Spleen (tissue), 13 donors: ENCODE measurements at regions of chr6 and their contacts with region 1.

Region 1: DNA sequence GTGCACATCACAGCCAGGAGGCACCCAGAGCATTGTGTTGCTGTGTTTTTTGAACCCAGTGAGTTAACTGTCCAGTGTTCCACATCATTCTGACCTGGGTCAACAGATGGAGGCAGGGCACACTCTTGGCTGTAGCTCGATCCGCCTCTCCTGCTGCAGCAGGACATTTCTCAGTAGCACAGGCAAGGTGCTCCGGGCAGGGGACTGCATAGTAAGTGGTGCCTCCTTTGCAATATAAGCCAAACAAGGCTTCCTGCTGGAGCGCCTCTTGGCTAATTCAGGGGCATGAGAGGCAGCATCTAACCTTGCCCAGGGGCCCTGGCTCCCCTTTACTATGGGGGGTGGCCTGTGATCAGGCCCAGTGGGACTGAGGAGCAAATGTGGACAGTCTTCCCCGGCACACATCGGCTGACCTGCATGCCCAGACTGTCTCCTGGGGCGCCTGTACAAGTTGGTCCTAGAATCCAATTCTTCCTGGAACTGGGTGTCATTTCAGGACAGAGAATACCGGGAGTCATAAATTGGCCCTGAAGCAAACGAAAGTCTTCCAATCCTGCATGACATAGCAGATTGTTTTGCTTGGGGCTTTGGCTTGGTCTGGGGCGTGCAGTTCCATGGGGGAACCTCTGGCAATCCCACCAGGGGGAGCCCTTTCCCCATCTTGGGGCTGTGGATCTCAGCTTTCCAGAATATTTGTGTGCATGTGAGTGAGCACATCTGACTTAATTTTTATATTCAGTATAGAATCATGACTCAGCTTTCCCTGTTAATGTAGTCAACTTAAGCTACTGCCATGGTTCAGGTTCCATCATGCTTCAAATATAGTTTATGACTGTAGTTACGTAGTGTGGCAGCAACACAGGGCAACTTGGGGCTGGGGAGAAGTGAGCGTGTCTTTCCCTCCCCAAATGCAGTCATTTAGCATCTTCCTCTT is 56.0 kb upstream of the DDR1 start:
- DNase-seq: peak; percentile 93
- H3K4me3 ChIP-seq: peak overlapping the region in 5 of 8 donors; percentile 22 to 65 (median 40)
- H3K27ac ChIP-seq: peak overlapping the region; percentile 36 to 91 (median 80)
- H3K4me1 ChIP-seq: peaks cover 10 to 86% (median 56%) of the 10 kb centered on the region in 6 donors
- H3K27me3 ChIP-seq: no peaks in the 10 kb centered on the region
- CTCF ChIP-seq: peak; percentile 84 to 98 (median 92)
- POLR2A ChIP-seq: no peak

Region 2: DNA sequence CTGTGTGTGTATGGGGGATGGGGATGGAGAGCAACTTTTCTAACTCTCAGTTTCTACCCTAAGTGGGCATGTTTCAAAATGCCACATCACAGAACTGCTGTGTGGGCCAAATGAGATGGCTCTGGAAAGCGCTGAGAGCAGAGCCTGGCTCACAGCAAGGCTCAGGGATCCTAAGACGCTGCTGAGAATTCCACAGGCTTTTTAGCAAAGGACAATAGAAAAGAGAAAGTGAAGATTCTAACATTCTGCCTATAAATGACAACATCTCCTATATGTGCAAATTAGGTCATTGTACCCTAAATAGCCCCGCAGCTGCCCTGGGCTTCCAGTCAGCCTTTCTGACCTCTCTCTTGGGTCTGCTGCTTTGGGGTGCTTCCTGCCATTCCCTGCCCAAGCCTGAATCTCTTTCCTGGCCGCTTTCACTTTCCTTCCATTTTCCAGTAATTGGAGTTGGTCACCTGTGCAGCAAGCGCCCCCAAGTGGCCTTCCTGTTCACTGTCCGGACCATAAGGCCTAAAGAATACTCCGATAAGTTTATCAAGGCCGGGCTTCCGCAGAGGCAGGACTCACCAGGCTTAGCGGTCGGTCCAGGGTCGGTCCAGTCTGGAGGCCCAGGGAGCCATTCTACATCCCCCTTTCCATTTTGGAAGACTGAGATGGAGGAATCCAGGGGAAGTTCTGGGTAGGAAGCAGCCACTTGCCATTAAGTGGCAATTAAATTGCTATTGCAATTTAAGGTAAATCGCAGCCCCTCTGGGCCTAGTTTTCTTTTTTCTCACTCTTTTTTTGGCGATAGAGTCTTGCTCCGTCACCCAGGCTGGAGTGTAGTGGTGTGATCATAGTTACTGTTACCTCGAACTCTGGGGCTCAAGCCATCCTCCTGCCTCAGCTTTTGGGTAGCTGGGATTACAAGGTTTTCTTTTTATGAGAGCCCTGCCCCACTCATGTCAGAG is 49.4 kb after region 1 on chr6:
- intact Hi-C with region 1: loop called (anchors 5 kb)
- DNase-seq: peak; percentile 93
- H3K4me3 ChIP-seq: peak overlapping the region in 7 of 8 donors; percentile 6 to 52 (median 16)
- H3K27ac ChIP-seq: peak overlapping the region; percentile 69 to 85 (median 80)
- H3K4me1 ChIP-seq: peaks cover 10 to 44% (median 26%) of the 10 kb centered on the region in 6 donors
- H3K27me3 ChIP-seq: no peaks in the 10 kb centered on the region
- CTCF ChIP-seq: peak; percentile 68 to 94 (median 84)
- POLR2A ChIP-seq: no peak

Region 3: DNA sequence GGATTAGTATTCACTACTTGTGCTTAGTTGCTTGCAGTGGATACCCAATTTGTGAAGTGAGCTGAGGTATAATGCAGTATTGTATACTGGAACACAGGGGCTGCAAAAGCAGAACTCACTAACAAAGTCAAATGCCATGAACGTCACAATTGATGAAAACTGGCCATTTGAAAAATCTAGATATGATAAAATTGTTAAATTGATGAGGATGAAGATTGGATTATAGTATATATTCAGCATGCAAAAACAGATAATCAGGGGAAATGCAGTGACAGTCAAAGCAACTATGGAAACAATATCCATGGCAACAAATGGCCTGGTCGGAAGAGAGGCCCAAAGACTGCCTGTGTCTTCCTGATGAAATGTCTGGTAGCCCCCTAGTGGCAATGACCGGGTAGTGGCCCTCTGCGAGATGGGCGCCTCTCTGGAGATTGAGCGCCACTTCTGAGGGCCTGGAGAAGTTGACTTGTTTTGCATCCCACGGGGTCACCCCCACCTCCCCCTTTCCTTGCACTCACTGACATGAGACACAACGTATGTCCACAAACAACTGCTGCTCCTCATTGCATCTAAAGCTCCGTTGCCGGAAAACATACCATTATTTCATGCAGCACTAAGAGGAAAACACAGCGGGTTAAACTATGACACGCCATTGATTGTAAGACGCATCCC is 240.5 kb after region 1 on chr6:
- intact Hi-C with region 1: loop called (anchors 2 kb)
- DNase-seq: peak; percentile 87
- H3K4me3 ChIP-seq: no peak overlapping the region
- H3K27ac ChIP-seq: no peak overlapping the region
- H3K4me1 ChIP-seq: peaks cover 0 to 9% (median 0%) of the 10 kb centered on the region in 6 donors
- H3K27me3 ChIP-seq: no peaks in the 10 kb centered on the region
- CTCF ChIP-seq: peak; percentile 77 to 98 (median 91)
- POLR2A ChIP-seq: no peak